ENCODE measurements at regions of chr2 and their contacts with region 1.

Region 1: DNA sequence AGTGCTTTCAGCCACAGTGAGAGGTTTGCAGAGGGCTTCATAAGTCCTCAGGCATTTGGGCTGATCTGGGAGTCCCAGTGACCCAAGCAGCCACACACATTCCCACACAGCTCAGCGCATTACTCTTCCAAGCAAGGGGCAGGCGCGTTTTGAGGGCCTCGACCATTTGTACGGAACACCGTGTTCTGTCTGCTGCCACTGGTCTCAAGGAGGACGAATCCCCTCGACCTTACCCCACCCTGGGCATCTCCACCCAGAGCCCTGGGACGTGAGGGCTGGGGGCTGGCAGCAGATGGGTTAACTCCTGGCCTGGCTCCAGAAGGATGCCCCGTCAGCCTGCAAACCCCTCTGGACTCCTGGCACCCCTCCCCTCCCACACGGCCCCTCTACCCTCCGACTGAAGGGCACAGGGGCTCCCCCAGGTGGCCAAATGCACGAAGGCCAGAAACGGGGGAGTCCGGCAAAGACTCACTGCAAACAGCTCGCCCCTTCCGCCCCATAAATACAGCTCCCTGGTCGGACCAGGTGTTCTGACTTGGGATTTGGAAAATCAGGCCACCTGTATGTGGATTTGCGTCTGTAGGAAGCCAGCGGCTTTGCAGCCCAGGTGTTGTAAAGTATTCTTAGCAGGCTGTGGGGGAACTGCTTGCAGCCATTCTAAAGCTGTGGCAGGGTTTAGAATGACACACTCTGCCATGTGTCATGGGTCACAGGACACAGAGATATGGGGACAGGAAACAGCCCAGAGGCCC is 33.6 kb upstream of the PTMA start:
- DNase-seq: peak; percentile 69
- ATAC-seq: peak; percentile 63
- H3K4me3 ChIP-seq: peak overlapping the region in 1 of 3 experiments; percentile 51; a peak in 2 of 6 replicates
- H3K27ac ChIP-seq: no peak overlapping the region
- H3K4me1 ChIP-seq: peaks cover 70% of the 10 kb centered on the region
- H3K27me3 ChIP-seq: peaks cover 0 to 7% of the 10 kb centered on the region in 2 experiments; a peak in 1 of 5 replicates
- CTCF ChIP-seq: peak; percentile 98
- EP300 ChIP-seq: no peak
- POLR2A ChIP-seq: no peak
- RAD21 ChIP-seq: peak; percentile 69

Region 2: DNA sequence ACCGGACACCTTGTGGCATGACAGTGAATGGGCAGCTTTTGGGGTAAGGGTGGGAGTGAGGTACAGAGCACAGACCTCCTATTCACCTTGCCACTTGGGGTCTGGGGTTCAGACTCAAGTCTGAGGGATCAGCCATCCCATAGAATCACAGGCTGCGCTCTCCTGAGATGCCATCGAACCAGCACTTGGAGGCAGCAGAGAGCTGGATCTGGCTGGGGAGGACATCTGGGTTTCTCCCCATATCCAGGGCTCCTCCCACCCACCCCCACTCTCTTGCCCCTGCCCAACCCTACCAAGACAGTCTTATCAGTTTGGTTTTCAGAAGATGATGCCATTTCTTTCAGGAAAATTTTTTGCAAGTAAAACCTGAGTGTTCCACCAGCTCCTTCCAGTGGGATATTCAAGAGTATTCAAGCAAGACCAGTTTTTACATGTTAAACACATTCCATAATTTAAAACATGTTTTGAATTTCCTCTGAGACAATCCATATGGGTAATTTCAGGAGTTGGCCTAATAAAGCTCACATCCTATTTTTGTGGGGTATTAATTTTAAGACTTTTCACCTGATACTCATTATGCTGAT is 111.3 kb before region 1 on chr2:
- CTCF ChIA-PET with region 1: no interaction called
- POLR2A ChIA-PET with region 1: no interaction called
- in situ Hi-C with region 1: no loop called
- intact Hi-C with region 1: loop called (anchors 1 kb)
- DNase-seq: peak; percentile 34
- ATAC-seq: peak; percentile 95
- H3K4me3 ChIP-seq: no peak overlapping the region
- H3K27ac ChIP-seq: no peak overlapping the region
- H3K4me1 ChIP-seq: no peaks in the 10 kb centered on the region
- H3K27me3 ChIP-seq: 0 out of 5 replicates have a peak, but pooled peaks cover 0 to 6% of the 10 kb centered on the region in 2 experiments
- CTCF ChIP-seq: peak; percentile 76
- EP300 ChIP-seq: no peak
- POLR2A ChIP-seq: no peak
- RAD21 ChIP-seq: 0 out of 2 replicates have a peak, but pooled peaks have one; percentile 21

Region 3: DNA sequence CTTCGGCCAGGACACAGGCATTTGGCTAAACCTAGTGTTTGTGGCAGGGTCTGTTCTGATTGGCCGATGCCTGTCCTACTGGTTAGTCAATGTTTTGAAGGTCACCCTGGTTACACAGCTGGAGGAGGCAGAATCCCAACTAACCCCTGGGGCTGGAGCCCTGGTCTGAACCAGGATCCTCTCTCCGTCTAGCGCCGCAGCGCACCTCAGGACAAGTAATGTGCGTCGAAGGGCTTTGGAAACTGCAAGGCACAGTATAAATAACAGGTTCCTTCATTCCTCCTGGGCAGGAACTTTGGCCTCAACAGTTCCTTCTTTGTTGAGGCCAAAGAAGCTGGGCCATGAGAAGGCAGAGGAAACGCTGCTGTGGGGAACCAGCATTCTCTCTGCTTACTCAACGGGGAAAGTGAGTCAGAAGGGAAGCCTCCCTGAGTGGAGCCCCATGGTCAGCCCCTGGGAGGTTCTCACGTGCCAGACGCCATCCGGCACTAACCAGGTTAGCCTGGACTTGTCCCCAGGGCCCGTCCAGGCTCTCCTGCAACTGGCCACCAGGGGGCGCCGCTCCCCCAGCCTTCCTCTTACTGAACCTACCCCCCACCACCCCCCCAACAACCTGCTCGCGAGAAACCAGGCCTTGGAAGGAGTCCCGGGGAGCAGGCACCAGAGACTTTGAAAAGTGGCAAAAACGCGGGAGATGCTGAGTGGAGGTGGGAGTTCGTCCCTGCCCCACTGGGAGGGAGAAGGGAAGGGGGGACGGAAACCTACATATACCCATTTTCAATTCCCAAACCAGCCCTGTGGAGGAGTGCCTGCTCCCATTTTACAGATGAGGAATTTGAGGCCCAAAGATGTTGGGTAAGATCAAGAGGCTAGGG is 62.3 kb before region 1 on chr2:
- CTCF ChIA-PET with region 1: interaction called, 39 read pairs
- POLR2A ChIA-PET with region 1: interaction called, 14 read pairs
- in situ Hi-C with region 1: loop called (anchors 5 kb)
- intact Hi-C with region 1: loop called (anchors 1 kb)
- DNase-seq: peak; percentile 80
- ATAC-seq: peak; percentile 72
- H3K4me3 ChIP-seq: peak overlapping the region in 1 of 3 experiments; percentile 45; a peak in 2 of 6 replicates
- H3K27ac ChIP-seq: peak overlapping the region; percentile 28
- H3K4me1 ChIP-seq: peaks cover 62% of the 10 kb centered on the region
- H3K27me3 ChIP-seq: peaks cover 3 to 8% of the 10 kb centered on the region in 2 experiments; a peak in 2 of 5 replicates
- CTCF ChIP-seq: peak; percentile 96
- EP300 ChIP-seq: no peak
- POLR2A ChIP-seq: no peak
- RAD21 ChIP-seq: peak; percentile 91

Region 4: DNA sequence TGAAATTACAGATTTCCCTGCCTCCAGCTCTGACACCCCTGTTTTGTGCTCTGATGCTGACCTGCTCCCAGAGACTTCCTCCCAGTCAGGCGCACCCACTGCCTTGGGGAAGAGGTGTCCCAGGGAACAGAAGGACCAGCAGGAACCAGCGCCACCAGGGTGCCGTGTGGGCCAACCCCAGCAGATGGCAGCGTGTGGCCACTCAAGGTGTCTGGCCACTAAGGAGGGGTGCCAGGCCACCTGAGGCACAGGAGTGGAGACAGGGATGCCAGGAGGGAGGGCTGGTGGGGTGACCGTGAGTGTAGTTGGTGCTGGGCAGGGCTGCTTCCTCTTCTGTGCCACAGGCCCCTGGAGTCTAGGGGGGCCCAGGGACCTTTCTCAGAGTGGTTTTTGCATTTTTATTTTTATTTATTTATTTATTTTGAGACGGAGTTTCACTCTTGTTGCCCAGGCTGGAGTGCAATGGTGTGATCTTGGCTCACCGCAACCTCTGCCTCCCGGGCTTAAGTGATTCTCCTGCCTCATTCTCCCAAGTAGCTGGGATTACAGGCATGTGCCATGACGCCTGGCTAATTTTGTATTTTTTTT is 26.1 kb before region 1 on chr2:
- CTCF ChIA-PET with region 1: interaction called, 45 read pairs
- POLR2A ChIA-PET with region 1: no interaction called
- in situ Hi-C with region 1: no loop called
- intact Hi-C with region 1: loop called (anchors 1 kb)
- DNase-seq: peak; percentile 65
- ATAC-seq: peak; percentile 95
- H3K4me3 ChIP-seq: no peak overlapping the region
- H3K27ac ChIP-seq: no peak overlapping the region
- H3K4me1 ChIP-seq: no peaks in the 10 kb centered on the region
- H3K27me3 ChIP-seq: peaks cover 2 to 36% of the 10 kb centered on the region in 2 experiments
- CTCF ChIP-seq: peak; percentile 92
- EP300 ChIP-seq: no peak
- POLR2A ChIP-seq: no peak
- RAD21 ChIP-seq: peak; percentile 93

Region 5: GRCh38 chr2:231687133-231687852 is 12.5 kb after region 1 on chr2:
- CTCF ChIA-PET with region 1: no interaction called
- POLR2A ChIA-PET with region 1: interaction called, 22 read pairs
- in situ Hi-C with region 1: no loop called
- intact Hi-C with region 1: no loop called
- DNase-seq: peak; percentile 81
- ATAC-seq: peak; percentile 85
- H3K4me3 ChIP-seq: peak overlapping the region in 2 of 3 experiments; percentile 18 to 55; a peak in 2 of 6 replicates
- H3K27ac ChIP-seq: no peak overlapping the region
- H3K4me1 ChIP-seq: peaks cover 53% of the 10 kb centered on the region
- H3K27me3 ChIP-seq: peaks cover 4 to 25% of the 10 kb centered on the region in 2 experiments; a peak in 3 of 5 replicates
- CTCF ChIP-seq: peak; percentile 99
- EP300 ChIP-seq: no peak
- POLR2A ChIP-seq: peak in 1 of 2 experiments; percentile 60; a peak in 2 of 4 replicates
- RAD21 ChIP-seq: peak; percentile 91

Region 6: GRCh38 chr2:231786177-231786916 is 111.6 kb after region 1 on chr2 and contains the start of gene COPS7B:
- CTCF ChIA-PET with region 1: no interaction called
- POLR2A ChIA-PET with region 1: interaction called, 5 read pairs
- in situ Hi-C with region 1: no loop called
- intact Hi-C with region 1: loop called (anchors 2 kb)
- DNase-seq: peak; percentile 84
- ATAC-seq: peak; percentile 84
- H3K4me3 ChIP-seq: peak within 1 kb of the TSS; percentile 84 to 96 (median 94)
- H3K27ac ChIP-seq: peak within 1 kb of the TSS; percentile 76
- H3K4me1 ChIP-seq: peaks cover 68% of the 10 kb centered on the region
- H3K27me3 ChIP-seq: no peaks in the 10 kb centered on the region; a peak in 1 of 5 replicates
- CTCF ChIP-seq: peak; percentile 85
- EP300 ChIP-seq: peak; percentile 35 to 72; a peak in 2 of 4 replicates
- POLR2A ChIP-seq: peak; percentile 64 to 80
- RAD21 ChIP-seq: peak; percentile 76
- total RNA-seq, gene COPS7B: 29.6 and 30.6 TPM in 2 replicates